ENCODE measurements at regions of chr15 and their contacts with region 1.

Region 1: DNA sequence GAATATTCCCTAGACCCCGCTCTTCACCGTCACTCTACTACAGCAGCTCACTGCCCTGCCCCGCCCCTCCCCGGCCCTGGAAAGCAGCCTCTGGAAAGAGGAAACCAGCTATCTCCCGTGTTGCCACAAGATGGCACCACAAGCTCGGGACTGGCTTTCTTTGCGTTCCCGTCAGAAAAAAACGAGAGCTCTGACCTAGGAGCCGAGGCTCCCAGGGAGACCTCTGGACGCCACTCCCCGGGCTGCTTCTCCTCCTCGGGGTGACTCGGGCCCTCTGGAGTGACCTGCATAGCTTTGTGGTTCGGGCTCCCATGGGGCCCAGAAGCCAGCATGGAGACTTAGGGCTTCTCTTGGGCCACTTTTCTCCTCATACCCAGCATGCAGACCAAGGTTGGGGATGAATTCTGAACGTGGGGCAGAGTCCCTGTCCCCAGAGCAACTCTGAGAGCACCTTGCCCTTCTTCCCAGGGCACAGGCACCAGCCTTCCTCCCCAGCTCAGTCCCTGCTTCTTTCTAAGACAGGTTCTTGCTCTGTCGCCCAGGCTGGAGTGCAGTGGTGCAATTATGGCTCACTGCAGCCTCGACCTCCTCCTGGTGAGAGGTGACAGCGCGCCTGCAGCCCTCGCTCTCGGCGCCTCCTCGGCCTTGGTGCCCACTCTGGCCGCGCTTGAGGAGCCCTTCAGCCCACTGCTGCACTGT is 19.0 kb downstream of the STOML1 start:
- DNase-seq: peak; percentile 63 to 96 (median 78)

Region 2: GRCh38 chr15:73838831-73839426 is 134.2 kb before region 1 on chr15:
- intact Hi-C with region 1: no loop called
- DNase-seq: peak; percentile 43 to 94 (median 71)

Region 3: GRCh38 chr15:74011610-74012009 is 38.5 kb after region 1 on chr15:
- intact Hi-C with region 1: no loop called
- DNase-seq: no peak

Region 4: GRCh38 chr15:74036271-74037170 is 63.4 kb after region 1 on chr15:
- intact Hi-C with region 1: loop called (anchors 10 kb)
- DNase-seq: peak in 9 of 10 donors; percentile 34 to 93 (median 70)

Region 5: DNA sequence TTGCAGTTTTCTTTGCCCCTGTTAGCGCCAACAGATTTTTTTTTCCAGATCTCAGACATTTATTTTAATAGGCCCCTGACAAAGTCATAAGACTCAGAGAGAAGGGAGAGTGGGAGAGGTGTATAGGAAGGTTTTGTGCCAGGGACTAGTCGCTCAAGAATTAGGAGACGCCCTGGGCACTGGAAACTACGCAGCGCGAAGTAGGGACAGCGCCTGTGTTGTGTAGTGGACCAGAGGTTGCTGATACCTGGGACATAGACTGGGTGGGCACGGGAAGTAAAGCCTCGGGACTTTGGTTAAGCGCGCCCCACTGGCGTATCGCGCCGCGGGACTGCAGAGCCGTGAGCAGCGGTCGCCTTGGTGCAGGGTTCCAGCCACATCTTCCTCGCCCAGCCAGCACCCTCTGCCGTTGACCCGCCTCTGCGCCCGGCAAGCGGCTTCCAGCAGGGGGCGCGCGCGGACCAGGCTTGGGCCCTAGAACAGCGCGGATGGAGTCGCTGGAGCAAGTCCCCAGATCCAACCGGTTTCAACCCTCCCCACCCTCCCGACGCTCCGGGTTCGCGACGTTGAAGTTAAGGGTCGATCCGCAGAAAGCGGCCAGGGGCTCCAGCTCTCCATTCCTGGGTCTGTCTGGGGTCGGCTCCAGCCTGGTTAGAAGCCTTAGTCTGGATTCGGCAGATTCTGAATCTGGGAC is 154.3 kb after region 1 on chr15:
- intact Hi-C with region 1: loop called (anchors 10 kb)
- DNase-seq: peak; percentile 81 to 99 (median 92)

Region 6: GRCh38 chr15:74322181-74323076 is 349.3 kb after region 1 on chr15:
- intact Hi-C with region 1: loop called (anchors 1 kb)
- DNase-seq: peak; percentile 58 to 96 (median 71)